CD14-positive monocyte (primary cell): ENCODE measurements at regions of chr3 and their contacts with region 1.

Region 1: GRCh38 chr3:43326891-43327581 is 40.7 kb downstream of the SNRK start:
- DNase-seq: peak in 2 of 3 donors; percentile 15 to 38
- H3K4me3 ChIP-seq: no peak overlapping the region
- H3K4me3 Mint-ChIP-seq: peak overlapping the region in 1 of 2 donors; percentile 11
- H3K27ac ChIP-seq: peak overlapping the region in 1 of 2 donors; percentile 69
- H3K27ac Mint-ChIP-seq: peak overlapping the region; percentile 51 to 92 (median 83)
- H3K4me1 ChIP-seq: peaks cover 27 to 52% of the 10 kb centered on the region in 2 donors
- H3K4me1 Mint-ChIP-seq: peaks cover 57% of the 10 kb centered on the region
- H3K27me3 ChIP-seq: no peaks in the 10 kb centered on the region
- H3K27me3 Mint-ChIP-seq: no peaks in the 10 kb centered on the region
- CTCF ChIP-seq: no peak

Region 2: GRCh38 chr3:43273416-43273815 is 53.6 kb before region 1 on chr3:
- intact Hi-C with region 1: no loop called
- DNase-seq: no peak
- H3K4me3 ChIP-seq: no peak overlapping the region
- H3K4me3 Mint-ChIP-seq: no peak overlapping the region
- H3K27ac ChIP-seq: no peak overlapping the region
- H3K27ac Mint-ChIP-seq: no peak overlapping the region
- H3K4me1 ChIP-seq: no peaks in the 10 kb centered on the region
- H3K4me1 Mint-ChIP-seq: no peaks in the 10 kb centered on the region
- H3K27me3 ChIP-seq: no peaks in the 10 kb centered on the region
- H3K27me3 Mint-ChIP-seq: peaks cover 2 to 7% (median 2%) of the 10 kb centered on the region in 3 donors
- CTCF ChIP-seq: no peak

Region 3: GRCh38 chr3:43378066-43378935 is 51.3 kb after region 1 on chr3:
- intact Hi-C with region 1: loop called in 1 of 2 experiments (anchors 10 kb)
- DNase-seq: peak; percentile 25 to 46 (median 38)
- H3K4me3 ChIP-seq: no peak overlapping the region
- H3K4me3 Mint-ChIP-seq: no peak overlapping the region
- H3K27ac ChIP-seq: no peak overlapping the region
- H3K27ac Mint-ChIP-seq: peak overlapping the region in 4 of 7 donors; percentile 13 to 73 (median 40)
- H3K4me1 ChIP-seq: no peaks in the 10 kb centered on the region
- H3K4me1 Mint-ChIP-seq: peaks cover 6% of the 10 kb centered on the region
- H3K27me3 ChIP-seq: no peaks in the 10 kb centered on the region
- H3K27me3 Mint-ChIP-seq: peaks cover 0 to 4% (median 0%) of the 10 kb centered on the region in 3 donors
- CTCF ChIP-seq: peak; percentile 79